Naive thymus-derived CD4-positive, alpha-beta T cell (primary cell): ENCODE measurements at regions of chr11 and their contacts with region 1.

Region 1: DNA sequence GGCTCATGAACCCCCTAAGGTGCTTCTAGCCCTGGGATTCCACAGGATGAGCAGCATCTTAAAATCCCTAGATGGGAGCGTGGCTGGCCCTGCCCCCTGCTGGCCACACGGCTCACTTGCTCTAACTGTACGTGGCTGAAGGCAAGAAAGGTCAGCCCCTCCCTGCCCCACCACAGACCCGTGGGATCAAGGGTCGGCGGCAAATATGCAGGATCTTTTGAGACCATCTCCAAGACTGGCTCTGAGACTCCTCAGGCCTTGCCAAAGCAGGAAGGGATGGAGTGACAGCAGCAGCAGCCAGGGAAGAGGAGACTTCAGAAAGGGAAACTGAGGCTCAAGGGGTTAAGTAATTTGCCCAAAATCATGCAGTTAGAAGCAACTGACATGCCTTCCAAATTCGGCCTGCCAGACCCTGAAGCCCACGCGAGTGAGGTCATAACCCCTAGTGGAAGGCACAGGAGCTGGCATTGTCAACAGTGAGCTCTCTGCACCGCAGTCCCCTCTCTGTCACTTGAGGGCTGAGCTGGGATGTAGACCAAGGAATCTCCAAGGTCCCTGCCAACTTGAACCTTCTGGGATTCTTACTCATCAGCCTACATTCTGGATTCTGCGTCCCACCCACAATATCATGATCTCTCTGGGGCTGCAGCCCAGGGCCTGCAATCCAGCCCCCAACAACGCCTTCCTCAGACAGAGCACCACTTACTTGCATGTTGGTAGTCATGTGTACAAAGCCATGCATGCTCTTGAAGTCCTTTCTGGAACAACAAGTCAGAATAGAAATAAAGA is 31.4 kb downstream of the CREB3L1 start:
- DNase-seq: peak; percentile 29 to 66 (median 53)
- ATAC-seq: peak; percentile 78
- H3K4me3 ChIP-seq: no peak overlapping the region
- H3K4me3 Mint-ChIP-seq: peak overlapping the region in 2 of 10 donors; percentile 53 to 56
- H3K27ac ChIP-seq: no peak overlapping the region
- H3K27ac Mint-ChIP-seq: peak overlapping the region in 3 of 9 donors; percentile 38 to 56 (median 44)
- H3K4me1 ChIP-seq: peaks cover 0 to 5% of the 10 kb centered on the region in 2 donors
- H3K4me1 Mint-ChIP-seq: peaks cover 10 to 23% (median 19%) of the 10 kb centered on the region in 7 donors
- H3K27me3 ChIP-seq: no peaks in the 10 kb centered on the region
- H3K27me3 Mint-ChIP-seq: peaks cover 0 to 3% (median 0%) of the 10 kb centered on the region in 5 donors

Region 2: GRCh38 chr11:45964911-45965389 is 343.9 kb before region 1 on chr11:
- CTCF ChIA-PET with region 1: interaction called, 6 read pairs
- POLR2A ChIA-PET with region 1: no interaction called
- intact Hi-C with region 1: loop called (anchors 1 to 2 kb)
- DNase-seq: peak; percentile 11 to 68 (median 61)
- ATAC-seq: peak; percentile 96
- H3K4me3 ChIP-seq: no peak overlapping the region
- H3K4me3 Mint-ChIP-seq: no peak overlapping the region
- H3K27ac ChIP-seq: no peak overlapping the region
- H3K27ac Mint-ChIP-seq: no peak overlapping the region
- H3K4me1 ChIP-seq: no peaks in the 10 kb centered on the region
- H3K4me1 Mint-ChIP-seq: no peaks in the 10 kb centered on the region
- H3K27me3 ChIP-seq: no peaks in the 10 kb centered on the region
- H3K27me3 Mint-ChIP-seq: no peaks in the 10 kb centered on the region

Region 3: DNA sequence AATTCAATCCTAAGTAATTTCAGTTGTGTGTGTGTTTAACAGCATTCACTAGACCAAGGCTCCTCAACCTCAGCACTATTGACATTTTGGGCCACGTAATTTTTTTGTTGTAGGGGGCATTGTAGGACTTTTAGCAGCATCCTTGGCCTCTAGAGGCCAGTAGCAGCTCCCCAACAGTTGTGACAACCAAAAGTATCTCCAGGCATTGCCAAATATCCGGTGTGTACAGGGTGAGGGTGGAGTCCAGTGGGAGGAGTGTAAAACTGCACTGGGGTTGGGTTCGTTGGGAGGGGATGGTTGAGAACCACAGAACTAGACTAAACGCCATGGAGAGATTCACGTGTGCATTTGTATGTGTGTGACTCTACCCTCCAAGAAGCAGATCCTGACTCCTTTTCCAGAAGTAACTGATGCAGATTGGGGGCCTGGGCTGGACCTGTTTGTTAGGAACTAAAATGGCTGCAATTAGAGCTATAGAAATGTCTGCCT is 181.6 kb before region 1 on chr11:
- CTCF ChIA-PET with region 1: no interaction called
- POLR2A ChIA-PET with region 1: no interaction called
- intact Hi-C with region 1: loop called (anchors 2 to 10 kb)
- DNase-seq: peak in 8 of 9 donors; percentile 45 to 70 (median 59)
- ATAC-seq: peak; percentile 100
- H3K4me3 ChIP-seq: no peak overlapping the region
- H3K4me3 Mint-ChIP-seq: peak overlapping the region in 6 of 10 donors; percentile 7 to 67 (median 40)
- H3K27ac ChIP-seq: no peak overlapping the region
- H3K27ac Mint-ChIP-seq: peak overlapping the region in 7 of 9 donors; percentile 4 to 78 (median 60)
- H3K4me1 ChIP-seq: peaks cover 4 to 13% of the 10 kb centered on the region in 2 donors
- H3K4me1 Mint-ChIP-seq: peaks cover 8 to 19% (median 17%) of the 10 kb centered on the region in 7 donors
- H3K27me3 ChIP-seq: no peaks in the 10 kb centered on the region
- H3K27me3 Mint-ChIP-seq: peaks cover 0 to 3% (median 0%) of the 10 kb centered on the region in 5 donors

Region 4: DNA sequence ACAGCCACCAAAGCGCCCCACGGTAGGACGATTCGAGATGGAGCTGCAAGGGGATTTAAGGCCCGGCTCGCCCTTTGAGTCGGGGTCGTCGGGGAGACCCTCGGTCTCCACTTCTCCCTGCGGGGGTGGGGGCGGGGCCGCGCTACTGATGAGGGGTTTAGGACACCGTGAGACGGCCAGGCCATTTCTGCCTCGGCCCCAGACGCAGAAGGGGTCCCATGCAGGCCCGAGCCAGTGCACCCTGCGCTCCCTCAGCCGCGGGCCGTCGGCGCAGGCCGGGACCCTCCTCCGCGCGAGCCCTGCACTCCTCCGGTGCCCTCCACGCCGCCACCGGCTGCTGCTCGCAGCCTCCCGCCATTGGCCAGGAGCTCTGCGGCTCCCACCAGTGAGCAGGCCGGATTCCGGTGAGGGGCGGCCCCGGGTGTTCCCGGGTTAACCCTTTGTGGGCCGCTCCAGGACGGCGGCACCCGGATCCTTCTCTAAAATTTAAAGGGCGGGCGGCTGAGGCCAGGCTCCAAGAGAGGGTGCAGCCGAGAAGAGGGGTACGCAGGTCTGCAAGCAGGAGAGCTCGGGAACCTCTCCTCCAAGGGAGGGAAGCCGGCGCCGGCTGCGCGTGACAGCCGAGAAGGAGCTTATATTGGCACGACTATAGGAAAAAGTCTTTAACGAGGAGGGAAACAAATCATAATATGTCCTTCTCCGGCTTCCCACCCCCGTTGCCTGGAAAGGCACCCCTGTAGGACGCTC is 13.3 kb before region 1 on chr11:
- CTCF ChIA-PET with region 1: interaction called, 11 read pairs
- POLR2A ChIA-PET with region 1: interaction called, 3 read pairs
- intact Hi-C with region 1: loop called in 1 of 2 experiments (anchors 1 kb)
- DNase-seq: peak; percentile 65 to 82 (median 80)
- ATAC-seq: peak; percentile 98
- H3K4me3 ChIP-seq: peak overlapping the region; percentile 78
- H3K4me3 Mint-ChIP-seq: peak overlapping the region; percentile 83 to 92 (median 86)
- H3K27ac ChIP-seq: peak overlapping the region; percentile 34
- H3K27ac Mint-ChIP-seq: peak overlapping the region in 3 of 9 donors; percentile 32 to 48 (median 38)
- H3K4me1 ChIP-seq: peaks cover 5 to 7% of the 10 kb centered on the region in 2 donors
- H3K4me1 Mint-ChIP-seq: peaks cover 0 to 15% (median 7%) of the 10 kb centered on the region in 7 donors
- H3K27me3 ChIP-seq: peaks cover 5 to 6% of the 10 kb centered on the region in 2 donors
- H3K27me3 Mint-ChIP-seq: peaks cover 0 to 35% (median 5%) of the 10 kb centered on the region in 5 donors

Region 5: DNA sequence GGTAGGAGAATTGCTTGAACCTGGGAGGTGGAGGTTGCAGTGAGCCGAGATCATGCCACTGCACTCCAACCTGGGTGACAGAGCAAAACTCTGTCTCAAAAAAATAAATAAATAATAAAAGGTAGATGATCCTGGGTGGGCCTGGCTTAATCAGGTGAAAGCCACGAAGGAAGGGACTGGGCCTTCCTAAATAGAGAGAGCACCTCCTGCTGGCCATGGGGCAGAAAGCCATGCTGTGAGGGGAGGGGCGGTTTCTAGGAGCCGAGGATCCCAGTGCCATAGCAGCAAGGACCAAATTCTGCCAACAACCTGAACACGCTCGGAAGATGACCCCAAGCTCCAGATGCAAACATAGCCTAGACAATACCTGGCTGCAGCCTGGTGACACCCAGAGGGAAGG is 13.9 kb after region 1 on chr11:
- CTCF ChIA-PET with region 1: interaction called, 10 read pairs
- POLR2A ChIA-PET with region 1: interaction called, 4 read pairs
- intact Hi-C with region 1: no loop called
- DNase-seq: no peak
- ATAC-seq: no peak
- H3K4me3 ChIP-seq: no peak overlapping the region
- H3K4me3 Mint-ChIP-seq: no peak overlapping the region
- H3K27ac ChIP-seq: no peak overlapping the region
- H3K27ac Mint-ChIP-seq: peak overlapping the region in 1 of 9 donors; percentile 50
- H3K4me1 ChIP-seq: peaks cover 6 to 16% of the 10 kb centered on the region in 2 donors
- H3K4me1 Mint-ChIP-seq: peaks cover 21 to 66% (median 38%) of the 10 kb centered on the region in 7 donors
- H3K27me3 ChIP-seq: no peaks in the 10 kb centered on the region
- H3K27me3 Mint-ChIP-seq: peaks cover 0 to 13% (median 0%) of the 10 kb centered on the region in 5 donors

Region 6: GRCh38 chr11:46367244-46367915 is 58.6 kb after region 1 on chr11:
- CTCF ChIA-PET with region 1: interaction called, 3 read pairs
- POLR2A ChIA-PET with region 1: no interaction called
- intact Hi-C with region 1: loop called in 1 of 2 experiments (anchors 1 kb)
- DNase-seq: peak; percentile 65 to 84 (median 77)
- ATAC-seq: peak; percentile 86
- H3K4me3 ChIP-seq: no peak overlapping the region
- H3K4me3 Mint-ChIP-seq: peak overlapping the region in 5 of 10 donors; percentile 21 to 50 (median 45)
- H3K27ac ChIP-seq: peak overlapping the region; percentile 30
- H3K27ac Mint-ChIP-seq: peak overlapping the region in 5 of 9 donors; percentile 17 to 83 (median 63)
- H3K4me1 ChIP-seq: peaks cover 6 to 25% of the 10 kb centered on the region in 2 donors
- H3K4me1 Mint-ChIP-seq: peaks cover 20 to 52% (median 38%) of the 10 kb centered on the region in 7 donors
- H3K27me3 ChIP-seq: no peaks in the 10 kb centered on the region
- H3K27me3 Mint-ChIP-seq: no peaks in the 10 kb centered on the region